ENCODE measurements at regions of chr5 and their contacts with region 1.

Region 1: GRCh38 chr5:159905496-159905895 is 10.8 kb upstream of the ADRA1B start:
- DNase-seq: peak; percentile 100
- H3K4me3 ChIP-seq: no peak overlapping the region
- H3K27ac ChIP-seq: peak overlapping the region; percentile 90
- H3K4me1 ChIP-seq: peaks cover 65% of the 10 kb centered on the region
- H3K27me3 ChIP-seq: no peaks in the 10 kb centered on the region
- CTCF ChIP-seq: no peak

Region 2: DNA sequence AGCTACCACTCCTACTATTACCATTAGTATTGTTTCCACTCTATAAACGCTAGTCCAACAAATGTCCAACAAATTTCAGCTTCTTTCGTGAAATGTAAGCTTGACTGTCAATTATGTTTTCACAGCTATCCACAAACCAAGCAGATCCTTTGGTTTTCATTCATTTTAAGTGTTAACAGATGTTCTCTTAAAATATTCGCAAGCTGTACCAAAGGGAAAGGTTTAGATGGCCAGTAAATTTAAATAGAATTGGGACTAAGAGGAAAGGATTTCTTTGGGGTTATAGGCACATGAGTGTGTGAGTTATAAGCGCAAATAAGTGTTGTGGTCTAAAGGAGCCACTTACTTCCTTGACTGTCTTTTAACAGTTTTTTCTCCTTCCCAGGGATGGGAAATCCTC is 126.0 kb before region 1 on chr5:
- CTCF ChIA-PET with region 1: no interaction called
- dilution Hi-C with region 1: no loop called
- in situ Hi-C with region 1: no loop called
- intact Hi-C with region 1: loop called (anchors 1 kb)
- DNase-seq: no peak
- H3K4me3 ChIP-seq: no peak overlapping the region
- H3K27ac ChIP-seq: peak overlapping the region; percentile 12
- H3K4me1 ChIP-seq: peaks cover 14% of the 10 kb centered on the region
- H3K27me3 ChIP-seq: no peaks in the 10 kb centered on the region
- CTCF ChIP-seq: no peak

Region 3: DNA sequence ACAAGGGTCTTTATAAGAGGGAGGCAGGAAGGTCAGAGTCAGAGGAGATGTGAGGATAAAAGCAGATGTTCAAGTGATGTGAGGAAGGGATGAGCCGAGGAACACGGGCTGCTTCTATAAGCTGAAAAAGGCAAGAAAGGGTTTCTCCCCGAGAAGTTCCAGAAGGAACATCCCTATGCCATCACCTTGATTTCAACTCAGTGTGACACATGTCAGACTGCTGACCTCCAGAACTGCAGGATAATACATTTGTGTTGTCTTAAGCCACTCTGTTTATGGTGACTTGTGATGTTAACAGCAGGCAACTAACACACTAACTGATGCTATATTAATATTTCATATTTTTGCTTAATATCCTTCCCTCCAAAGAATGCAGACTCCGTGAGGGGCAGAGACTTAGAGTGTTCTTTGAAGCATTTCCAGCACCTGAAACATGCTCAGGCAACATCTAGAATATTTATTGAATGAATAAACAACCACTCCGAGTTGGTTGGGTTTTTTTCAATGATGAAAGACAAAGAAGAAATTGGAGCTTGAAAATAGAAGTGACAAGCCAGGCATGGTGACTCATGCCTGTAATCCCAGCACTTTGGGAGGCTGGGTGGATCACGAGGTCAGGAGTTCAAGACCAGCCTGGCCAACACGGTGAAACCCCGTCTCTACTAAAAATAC is 66.8 kb before region 1 on chr5:
- CTCF ChIA-PET with region 1: no interaction called
- dilution Hi-C with region 1: no loop called
- in situ Hi-C with region 1: no loop called
- intact Hi-C with region 1: loop called (anchors 1 kb)
- DNase-seq: peak; percentile 89
- H3K4me3 ChIP-seq: no peak overlapping the region
- H3K27ac ChIP-seq: peak overlapping the region; percentile 34
- H3K4me1 ChIP-seq: peaks cover 30% of the 10 kb centered on the region
- H3K27me3 ChIP-seq: no peaks in the 10 kb centered on the region
- CTCF ChIP-seq: no peak

Region 4: DNA sequence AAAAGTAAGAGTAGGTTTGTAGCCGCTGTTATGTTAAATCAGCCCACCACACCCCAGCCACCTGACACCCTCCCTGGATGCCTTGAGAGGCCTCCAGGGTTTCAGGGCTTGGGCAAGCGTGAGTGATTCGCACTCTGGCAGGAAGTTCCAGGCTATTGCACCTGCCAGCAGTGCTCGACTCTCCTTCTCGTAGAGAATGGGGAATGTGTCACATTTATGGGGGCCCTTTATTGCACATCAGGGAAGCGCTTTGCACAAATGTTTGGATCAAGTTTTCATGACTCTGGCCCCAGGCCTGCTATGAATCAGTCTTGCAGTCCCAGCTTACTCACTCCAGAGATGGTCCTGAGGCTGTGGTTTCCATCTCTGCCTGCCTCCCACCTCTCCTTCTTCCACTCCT is 55.3 kb before region 1 on chr5:
- CTCF ChIA-PET with region 1: no interaction called
- dilution Hi-C with region 1: no loop called
- in situ Hi-C with region 1: no loop called
- intact Hi-C with region 1: loop called (anchors 1 kb)
- DNase-seq: peak; percentile 90
- H3K4me3 ChIP-seq: no peak overlapping the region
- H3K27ac ChIP-seq: peak overlapping the region; percentile 49
- H3K4me1 ChIP-seq: peaks cover 25% of the 10 kb centered on the region
- H3K27me3 ChIP-seq: no peaks in the 10 kb centered on the region
- CTCF ChIP-seq: no peak

Region 5: DNA sequence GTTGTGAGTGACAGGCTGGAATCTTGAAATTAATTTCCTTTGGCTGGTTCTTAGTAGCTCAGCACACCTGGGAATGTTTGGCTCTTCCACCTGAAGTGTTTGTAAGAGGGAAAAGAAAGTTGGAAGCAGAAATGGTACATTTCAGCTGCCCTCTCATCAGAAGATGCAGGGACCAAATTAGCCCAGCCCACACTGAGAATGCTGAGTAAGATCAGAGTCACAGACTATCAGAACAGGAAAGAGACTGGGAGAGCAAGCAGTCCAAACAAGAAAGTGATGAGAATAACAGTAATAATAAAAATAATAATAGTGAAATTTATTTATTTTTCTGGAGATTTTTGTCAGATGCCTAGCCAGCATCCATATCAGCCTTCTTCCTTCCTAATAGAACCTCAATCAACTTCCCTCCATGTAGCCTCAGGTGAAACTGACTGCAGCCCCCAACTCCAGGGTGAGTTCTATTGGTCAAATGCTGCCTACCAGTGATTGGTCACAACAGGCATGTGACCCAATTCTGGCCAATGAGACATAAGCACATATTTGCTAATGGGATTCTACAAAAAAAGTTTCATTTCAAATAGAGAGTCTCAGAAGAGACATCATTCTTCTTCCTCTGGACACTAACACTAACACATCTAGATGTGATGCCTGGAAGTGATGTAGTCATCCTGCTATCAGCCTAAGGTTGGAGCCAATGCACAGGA is 20.4 kb before region 1 on chr5:
- CTCF ChIA-PET with region 1: no interaction called
- dilution Hi-C with region 1: no loop called
- in situ Hi-C with region 1: no loop called
- intact Hi-C with region 1: loop called (anchors 1 kb)
- DNase-seq: peak; percentile 41
- H3K4me3 ChIP-seq: no peak overlapping the region
- H3K27ac ChIP-seq: no peak overlapping the region
- H3K4me1 ChIP-seq: peaks cover 20% of the 10 kb centered on the region
- H3K27me3 ChIP-seq: no peaks in the 10 kb centered on the region
- CTCF ChIP-seq: no peak